ENCODE measurements at regions of chr7 and their contacts with region 1.

Region 1: DNA sequence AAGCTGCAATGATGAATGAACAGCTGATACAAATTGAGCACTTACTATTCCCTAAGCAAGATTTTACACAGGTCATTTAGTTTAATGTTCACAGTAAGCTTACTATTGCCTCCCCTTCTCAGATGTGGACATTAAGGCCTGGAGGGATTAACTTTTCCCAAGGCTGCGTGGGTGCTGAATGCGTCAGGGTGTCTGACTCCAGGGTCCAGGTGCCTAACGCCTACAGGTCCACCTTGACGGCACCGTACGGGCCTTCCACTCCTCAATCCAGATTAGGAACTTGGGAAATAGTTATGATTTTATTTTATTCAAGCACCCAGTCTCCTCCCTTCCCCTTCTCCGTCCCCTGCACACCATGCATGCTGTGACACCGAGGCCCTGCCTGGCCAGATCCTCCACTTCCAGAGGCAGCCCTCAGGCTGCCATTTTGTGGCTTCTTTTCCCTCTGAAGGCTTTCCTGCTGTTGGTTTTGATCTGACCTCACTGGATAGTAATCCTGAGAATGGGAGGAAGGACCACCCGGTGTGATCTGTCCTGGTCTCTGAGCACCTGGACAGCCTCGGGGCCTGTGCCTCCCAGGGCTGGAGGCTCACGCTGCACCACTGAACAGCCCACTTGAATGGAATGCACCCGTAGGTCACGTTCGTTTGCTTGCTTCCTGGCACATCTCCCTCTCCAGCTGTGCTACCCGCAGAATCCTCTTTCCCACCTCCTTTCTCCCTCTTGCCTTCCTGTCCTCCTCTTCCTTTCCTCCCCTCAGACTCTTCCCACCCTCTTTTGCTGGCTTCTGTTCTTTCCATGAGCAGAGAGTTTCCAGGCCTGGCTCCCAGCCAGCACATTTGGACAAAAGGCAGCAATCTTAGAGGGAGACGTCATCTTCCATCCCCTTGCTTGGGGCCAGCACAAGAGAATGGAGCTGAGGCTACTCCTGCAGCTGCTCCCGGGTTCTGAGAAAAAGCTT is 14.4 kb downstream of the DENND2A start:
- DNase-seq: no peak
- ATAC-seq: no peak
- H3K4me3 ChIP-seq: no peak overlapping the region
- H3K4me3 Mint-ChIP-seq: no peak overlapping the region
- H3K27ac ChIP-seq: no peak overlapping the region
- H3K27ac Mint-ChIP-seq: no peak overlapping the region
- H3K4me1 ChIP-seq: no peaks in the 10 kb centered on the region
- H3K4me1 Mint-ChIP-seq: peaks cover 7% of the 10 kb centered on the region
- H3K27me3 ChIP-seq: peaks cover 0 to 2% (median 0%) of the 10 kb centered on the region in 4 experiments
- H3K27me3 Mint-ChIP-seq: peaks cover 19% of the 10 kb centered on the region
- CTCF ChIP-seq: no peak

Region 2: DNA sequence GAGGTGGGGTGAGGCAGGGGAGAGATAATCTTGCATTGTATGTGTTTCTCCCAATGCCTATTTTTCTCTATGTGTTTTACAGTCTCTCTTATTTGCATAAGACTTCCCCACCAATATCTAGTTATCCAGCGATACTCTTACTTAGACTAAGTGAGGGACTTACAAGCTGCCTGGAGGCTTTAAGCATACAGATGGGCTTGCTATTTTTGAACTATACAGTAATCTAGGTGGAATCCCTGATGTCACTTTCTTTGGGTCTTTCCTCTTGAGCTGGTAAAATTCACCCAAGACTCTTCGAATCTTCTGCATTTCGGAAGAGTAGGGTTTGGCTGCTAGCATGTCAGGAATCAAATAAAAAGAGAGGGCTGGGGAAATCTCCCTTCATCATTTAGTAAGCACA is 146.9 kb after region 1 on chr7:
- CTCF ChIA-PET with region 1: no interaction called
- POLR2A ChIA-PET with region 1: no interaction called
- intact Hi-C with region 1: no loop called
- DNase-seq: no peak
- ATAC-seq: no peak
- H3K4me3 ChIP-seq: no peak overlapping the region
- H3K4me3 Mint-ChIP-seq: no peak overlapping the region
- H3K27ac ChIP-seq: no peak overlapping the region
- H3K27ac Mint-ChIP-seq: no peak overlapping the region
- H3K4me1 ChIP-seq: no peaks in the 10 kb centered on the region
- H3K4me1 Mint-ChIP-seq: no peaks in the 10 kb centered on the region
- H3K27me3 ChIP-seq: no peaks in the 10 kb centered on the region
- H3K27me3 Mint-ChIP-seq: no peaks in the 10 kb centered on the region
- CTCF ChIP-seq: no peak

Region 3: DNA sequence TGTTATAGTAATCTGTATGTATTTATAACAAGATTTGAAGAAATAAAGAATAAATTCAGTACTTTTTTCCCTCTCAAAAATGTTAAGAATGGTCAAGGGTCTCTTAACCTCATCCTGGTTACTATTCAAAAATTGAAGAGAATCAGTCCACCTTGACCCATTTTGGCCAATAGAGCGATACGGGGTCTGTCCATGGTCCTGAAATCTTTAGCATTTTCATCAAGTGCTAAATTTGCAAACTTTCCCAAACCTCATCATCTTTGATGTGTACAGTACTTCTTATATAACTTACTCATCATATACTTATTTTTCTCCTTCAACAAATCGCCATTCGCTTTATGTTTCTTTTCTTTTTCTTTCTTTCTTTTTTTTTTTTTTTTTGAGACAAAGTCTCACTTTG is 471.2 kb after region 1 on chr7:
- CTCF ChIA-PET with region 1: no interaction called
- POLR2A ChIA-PET with region 1: interaction called, 12 read pairs
- intact Hi-C with region 1: no loop called
- DNase-seq: no peak
- ATAC-seq: no peak
- H3K4me3 ChIP-seq: no peak overlapping the region
- H3K4me3 Mint-ChIP-seq: no peak overlapping the region
- H3K27ac ChIP-seq: no peak overlapping the region
- H3K27ac Mint-ChIP-seq: no peak overlapping the region
- H3K4me1 ChIP-seq: no peaks in the 10 kb centered on the region
- H3K4me1 Mint-ChIP-seq: no peaks in the 10 kb centered on the region
- H3K27me3 ChIP-seq: no peaks in the 10 kb centered on the region
- H3K27me3 Mint-ChIP-seq: peaks cover 14% of the 10 kb centered on the region
- CTCF ChIP-seq: no peak

Region 4: GRCh38 chr7:141161550-141162535 is 535.7 kb after region 1 on chr7:
- CTCF ChIA-PET with region 1: no interaction called
- POLR2A ChIA-PET with region 1: no interaction called
- intact Hi-C with region 1: no loop called
- DNase-seq: no peak
- ATAC-seq: no peak
- H3K4me3 ChIP-seq: no peak overlapping the region
- H3K4me3 Mint-ChIP-seq: no peak overlapping the region
- H3K27ac ChIP-seq: no peak overlapping the region
- H3K27ac Mint-ChIP-seq: no peak overlapping the region
- H3K4me1 ChIP-seq: peaks cover 0 to 6% of the 10 kb centered on the region in 2 donors
- H3K4me1 Mint-ChIP-seq: peaks cover 13% of the 10 kb centered on the region
- H3K27me3 ChIP-seq: no peaks in the 10 kb centered on the region
- H3K27me3 Mint-ChIP-seq: peaks cover 4% of the 10 kb centered on the region
- CTCF ChIP-seq: no peak